Naive thymus-derived CD4-positive, alpha-beta T cell (primary cell): ENCODE measurements at regions of chr15 and their contacts with region 1.

Region 1: GRCh38 chr15:90648137-90649070 is 68.7 kb upstream of the BLM start:
- DNase-seq: peak in 8 of 9 donors; percentile 48 to 69 (median 58)
- ATAC-seq: peak; percentile 83
- H3K4me3 ChIP-seq: no peak overlapping the region
- H3K4me3 Mint-ChIP-seq: peak overlapping the region; percentile 29 to 83 (median 68)
- H3K27ac ChIP-seq: no peak overlapping the region
- H3K27ac Mint-ChIP-seq: peak overlapping the region in 6 of 9 donors; percentile 31 to 95 (median 47)
- H3K4me1 ChIP-seq: peaks cover 9 to 15% of the 10 kb centered on the region in 2 donors
- H3K4me1 Mint-ChIP-seq: peaks cover 27 to 54% (median 37%) of the 10 kb centered on the region in 7 donors
- H3K27me3 ChIP-seq: no peaks in the 10 kb centered on the region
- H3K27me3 Mint-ChIP-seq: peaks cover 0 to 4% (median 0%) of the 10 kb centered on the region in 5 donors

Region 2: GRCh38 chr15:90451053-90451850 is 197.2 kb before region 1 on chr15:
- CTCF ChIA-PET with region 1: no interaction called
- POLR2A ChIA-PET with region 1: no interaction called
- intact Hi-C with region 1: no loop called
- DNase-seq: no peak
- ATAC-seq: no peak
- H3K4me3 ChIP-seq: no peak overlapping the region
- H3K4me3 Mint-ChIP-seq: no peak overlapping the region
- H3K27ac ChIP-seq: no peak overlapping the region
- H3K27ac Mint-ChIP-seq: peak overlapping the region in 1 of 9 donors; percentile 27
- H3K4me1 ChIP-seq: no peaks in the 10 kb centered on the region
- H3K4me1 Mint-ChIP-seq: peaks cover 0 to 4% (median 0%) of the 10 kb centered on the region in 7 donors
- H3K27me3 ChIP-seq: no peaks in the 10 kb centered on the region
- H3K27me3 Mint-ChIP-seq: no peaks in the 10 kb centered on the region

Region 3: GRCh38 chr15:90660195-90660998 is 12.0 kb after region 1 on chr15:
- CTCF ChIA-PET with region 1: interaction called, 8 read pairs
- POLR2A ChIA-PET with region 1: interaction called, 3 read pairs
- intact Hi-C with region 1: loop called (anchors 1 kb)
- DNase-seq: peak in 6 of 9 donors; percentile 25 to 68 (median 38)
- ATAC-seq: peak; percentile 83
- H3K4me3 ChIP-seq: peak overlapping the region; percentile 45
- H3K4me3 Mint-ChIP-seq: peak overlapping the region; percentile 68 to 93 (median 83)
- H3K27ac ChIP-seq: no peak overlapping the region
- H3K27ac Mint-ChIP-seq: peak overlapping the region in 4 of 9 donors; percentile 32 to 79 (median 74)
- H3K4me1 ChIP-seq: peaks cover 40 to 50% of the 10 kb centered on the region in 2 donors
- H3K4me1 Mint-ChIP-seq: peaks cover 61 to 93% (median 80%) of the 10 kb centered on the region in 7 donors
- H3K27me3 ChIP-seq: no peaks in the 10 kb centered on the region
- H3K27me3 Mint-ChIP-seq: peaks cover 0 to 32% (median 14%) of the 10 kb centered on the region in 5 donors

Region 4: GRCh38 chr15:90686435-90687218 is 38.2 kb after region 1 on chr15:
- CTCF ChIA-PET with region 1: interaction called, 11 read pairs
- POLR2A ChIA-PET with region 1: interaction called, 4 read pairs
- intact Hi-C with region 1: loop called in 1 of 2 experiments (anchors 1 kb)
- DNase-seq: peak in 7 of 9 donors; percentile 52 to 83 (median 72)
- ATAC-seq: peak; percentile 91
- H3K4me3 ChIP-seq: no peak overlapping the region
- H3K4me3 Mint-ChIP-seq: peak overlapping the region; percentile 16 to 77 (median 46)
- H3K27ac ChIP-seq: peak overlapping the region; percentile 24
- H3K27ac Mint-ChIP-seq: peak overlapping the region; percentile 41 to 97 (median 80)
- H3K4me1 ChIP-seq: peaks cover 10 to 20% of the 10 kb centered on the region in 2 donors
- H3K4me1 Mint-ChIP-seq: peaks cover 25 to 51% (median 36%) of the 10 kb centered on the region in 7 donors
- H3K27me3 ChIP-seq: no peaks in the 10 kb centered on the region
- H3K27me3 Mint-ChIP-seq: no peaks in the 10 kb centered on the region

Region 5: GRCh38 chr15:90851940-90852339 is 203.5 kb after region 1 on chr15:
- CTCF ChIA-PET with region 1: no interaction called
- POLR2A ChIA-PET with region 1: no interaction called
- intact Hi-C with region 1: loop called in 1 of 2 experiments (anchors 1 kb)
- DNase-seq: no peak
- ATAC-seq: no peak
- H3K4me3 ChIP-seq: no peak overlapping the region
- H3K4me3 Mint-ChIP-seq: peak overlapping the region in 7 of 10 donors; percentile 18 to 87 (median 52)
- H3K27ac ChIP-seq: no peak overlapping the region
- H3K27ac Mint-ChIP-seq: peak overlapping the region in 5 of 9 donors; percentile 27 to 92 (median 54)
- H3K4me1 ChIP-seq: peaks cover 19 to 21% of the 10 kb centered on the region in 2 donors
- H3K4me1 Mint-ChIP-seq: peaks cover 24 to 78% (median 38%) of the 10 kb centered on the region in 7 donors
- H3K27me3 ChIP-seq: no peaks in the 10 kb centered on the region
- H3K27me3 Mint-ChIP-seq: peaks cover 0 to 6% (median 0%) of the 10 kb centered on the region in 5 donors